PC-9 (cell line): ENCODE measurements at regions of chr9 and their contacts with region 1.

Region 1: GRCh38 chr9:78932830-78933627 is 636.1 kb downstream of the PSAT1 start:
- DNase-seq: peak in 1 of 2 experiments; percentile 7
- H3K4me3 ChIP-seq: no peak overlapping the region
- H3K27ac ChIP-seq: no peak overlapping the region
- H3K4me1 ChIP-seq: no peaks in the 10 kb centered on the region
- H3K27me3 ChIP-seq: no peaks in the 10 kb centered on the region
- CTCF ChIP-seq: no peak

Region 2: DNA sequence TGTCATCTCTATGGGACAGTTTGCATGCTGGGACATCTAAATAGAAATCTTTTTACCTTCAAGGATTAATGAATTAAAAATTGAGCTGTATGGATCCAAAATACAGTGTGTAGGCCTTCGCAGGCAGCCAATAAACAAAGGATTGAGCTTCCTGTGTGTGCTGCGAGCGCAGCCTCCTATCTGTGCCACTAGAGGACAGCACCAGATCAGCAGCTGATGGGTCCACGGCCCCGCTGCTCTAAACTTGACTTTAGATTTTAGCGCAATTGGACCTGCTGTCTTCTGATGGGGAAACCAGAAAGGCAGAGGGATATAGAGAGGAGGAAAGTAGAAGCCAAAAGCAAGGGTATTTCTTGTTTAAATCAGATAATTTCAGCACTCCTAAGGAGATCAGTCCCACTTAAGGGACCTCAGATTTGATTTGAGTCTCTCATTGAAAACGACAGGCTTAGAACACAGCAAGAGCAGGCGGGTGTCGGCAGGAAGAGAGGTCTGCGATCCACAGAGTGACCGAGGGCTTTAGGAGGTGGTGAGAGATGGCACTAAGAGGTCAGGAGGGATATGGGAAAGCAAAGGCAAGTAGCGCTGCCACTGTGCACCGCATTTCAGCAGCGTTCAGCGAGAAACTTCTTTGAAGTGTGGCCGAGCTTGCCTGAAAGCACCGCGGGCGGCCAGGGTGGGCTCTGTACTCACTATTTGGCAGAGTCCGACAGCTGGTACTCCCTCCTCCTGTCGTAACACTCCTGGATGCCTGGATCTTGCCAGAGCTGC is 1499.2 kb before region 1 on chr9:
- CTCF ChIA-PET with region 1: no interaction called
- POLR2A ChIA-PET with region 1: no interaction called
- intact Hi-C with region 1: no loop called
- DNase-seq: peak in 1 of 2 experiments; percentile 51
- H3K4me3 ChIP-seq: no peak overlapping the region
- H3K27ac ChIP-seq: no peak overlapping the region
- H3K4me1 ChIP-seq: no peaks in the 10 kb centered on the region
- H3K27me3 ChIP-seq: no peaks in the 10 kb centered on the region
- CTCF ChIP-seq: peak; percentile 92

Region 3: DNA sequence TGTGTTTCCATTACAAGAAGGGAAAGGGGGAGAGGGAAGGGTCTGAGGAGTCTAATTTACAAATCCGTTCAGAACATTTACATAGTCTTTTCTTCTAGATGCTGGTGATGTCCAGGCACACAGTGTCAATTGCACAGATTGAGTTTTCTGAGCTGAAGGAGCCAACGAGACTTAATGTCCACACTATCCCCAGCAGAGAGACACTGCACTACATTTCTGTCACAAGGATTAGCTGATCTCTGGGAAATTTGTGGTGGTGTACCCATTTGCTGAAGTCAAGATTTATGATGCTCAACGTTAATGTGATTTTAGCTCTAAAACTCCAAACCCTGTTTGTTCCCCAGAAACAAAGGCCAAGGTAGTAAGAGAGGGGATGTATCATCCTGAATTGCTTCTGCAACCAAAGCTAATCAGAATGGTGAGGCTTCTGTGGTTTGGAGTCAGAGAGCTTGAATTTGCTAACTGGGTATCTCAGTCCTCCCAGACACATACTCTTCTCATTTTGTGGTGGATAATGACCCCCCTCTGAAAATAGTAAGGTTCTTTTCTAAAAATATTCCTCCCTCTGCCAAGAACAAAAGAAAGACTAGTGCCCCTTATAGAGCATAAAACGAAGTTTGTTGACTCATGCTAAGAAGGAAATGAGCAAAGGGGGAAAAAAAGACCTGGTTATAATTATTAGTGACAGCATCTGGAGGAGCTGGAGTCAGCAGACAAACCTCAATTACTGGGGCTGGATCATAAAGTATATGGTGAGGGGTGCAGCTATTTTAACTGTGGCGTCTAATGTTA is 219.2 kb before region 1 on chr9:
- CTCF ChIA-PET with region 1: no interaction called
- POLR2A ChIA-PET with region 1: no interaction called
- intact Hi-C with region 1: no loop called
- DNase-seq: no peak
- H3K4me3 ChIP-seq: no peak overlapping the region
- H3K27ac ChIP-seq: no peak overlapping the region
- H3K4me1 ChIP-seq: no peaks in the 10 kb centered on the region
- H3K27me3 ChIP-seq: 0 out of 2 replicates have a peak, but pooled peaks cover 2% of the 10 kb centered on the region
- CTCF ChIP-seq: no peak

Region 4: DNA sequence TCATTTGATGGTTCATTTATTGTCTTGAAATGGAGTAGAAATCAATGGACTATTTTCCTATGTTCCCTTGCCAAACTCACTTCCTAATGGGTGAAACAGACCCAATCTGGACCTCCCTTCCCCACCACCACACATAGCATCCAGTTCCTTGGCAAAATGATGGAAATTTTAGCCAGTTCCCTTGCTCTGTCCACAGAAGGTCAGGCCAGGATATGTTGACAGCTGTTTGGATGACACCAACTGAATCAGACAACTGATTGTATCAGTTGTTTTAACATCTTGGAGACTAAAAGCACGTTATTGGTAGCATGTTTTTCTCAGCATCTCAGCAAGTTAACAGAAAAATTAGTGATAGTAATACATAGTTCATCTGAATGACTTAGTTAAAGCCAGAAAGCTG is 101.3 kb before region 1 on chr9:
- CTCF ChIA-PET with region 1: no interaction called
- POLR2A ChIA-PET with region 1: no interaction called
- intact Hi-C with region 1: loop called (anchors 10 kb)
- DNase-seq: no peak
- H3K4me3 ChIP-seq: no peak overlapping the region
- H3K27ac ChIP-seq: no peak overlapping the region
- H3K4me1 ChIP-seq: no peaks in the 10 kb centered on the region
- H3K27me3 ChIP-seq: no peaks in the 10 kb centered on the region
- CTCF ChIP-seq: no peak

Region 5: DNA sequence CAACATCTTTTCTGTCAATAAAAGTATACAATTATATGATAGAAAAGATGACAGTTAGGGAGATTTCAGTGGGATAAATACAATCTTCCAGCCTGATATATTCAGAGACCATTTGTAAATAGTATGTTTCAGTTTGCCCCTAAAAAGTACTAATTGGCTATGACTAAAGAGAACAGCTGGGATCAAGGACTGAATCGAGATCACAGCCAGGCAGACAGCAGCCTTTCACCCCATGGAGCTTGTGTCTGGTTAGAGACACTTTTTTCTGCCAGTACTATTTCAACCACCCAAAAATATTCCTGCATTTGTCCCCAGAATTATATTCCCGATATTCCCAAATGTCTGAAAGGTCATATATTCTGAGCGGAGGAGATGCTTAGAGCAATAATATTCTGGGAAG is 61.4 kb after region 1 on chr9:
- CTCF ChIA-PET with region 1: no interaction called
- POLR2A ChIA-PET with region 1: no interaction called
- intact Hi-C with region 1: no loop called
- DNase-seq: no peak
- H3K4me3 ChIP-seq: no peak overlapping the region
- H3K27ac ChIP-seq: no peak overlapping the region
- H3K4me1 ChIP-seq: no peaks in the 10 kb centered on the region
- H3K27me3 ChIP-seq: no peaks in the 10 kb centered on the region
- CTCF ChIP-seq: no peak

Region 6: DNA sequence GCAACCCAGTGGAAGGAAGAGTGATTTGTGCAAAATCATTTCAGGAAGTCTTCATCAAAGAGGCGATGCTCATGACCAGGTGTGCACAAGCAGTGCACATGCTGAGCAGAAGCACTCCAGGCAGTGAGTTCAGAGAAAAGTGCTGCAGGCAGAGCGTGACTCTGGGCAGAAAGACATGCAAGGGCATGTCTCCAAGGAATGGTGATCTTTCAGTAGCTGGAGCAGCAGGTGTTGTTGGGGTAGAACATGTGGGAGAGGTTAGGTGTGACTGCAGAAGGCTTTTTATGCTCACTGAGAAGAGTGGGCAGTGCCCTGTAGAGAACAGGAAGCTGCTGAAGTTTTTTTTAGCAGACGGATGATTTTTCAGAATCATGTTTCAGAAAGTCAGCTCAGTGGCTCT is 93.3 kb after region 1 on chr9:
- CTCF ChIA-PET with region 1: no interaction called
- POLR2A ChIA-PET with region 1: no interaction called
- intact Hi-C with region 1: loop called (anchors 10 kb)
- DNase-seq: peak in 1 of 2 experiments; percentile 11
- H3K4me3 ChIP-seq: no peak overlapping the region
- H3K27ac ChIP-seq: no peak overlapping the region
- H3K4me1 ChIP-seq: no peaks in the 10 kb centered on the region
- H3K27me3 ChIP-seq: no peaks in the 10 kb centered on the region
- CTCF ChIP-seq: no peak